AG04449 (cell line): ENCODE measurements at regions of chr12 and their contacts with region 1.

Region 1: GRCh38 chr12:95532851-95533250 is 18.4 kb downstream of the USP44 start:
- DNase-seq: no peak
- H3K4me3 ChIP-seq: no peak overlapping the region
- CTCF ChIP-seq: no peak

Region 2: GRCh38 chr12:95343461-95344230 is 189.2 kb before region 1 on chr12:
- CTCF ChIA-PET with region 1: interaction called, 24 read pairs
- POLR2A ChIA-PET with region 1: no interaction called
- DNase-seq: no peak
- H3K4me3 ChIP-seq: no peak overlapping the region
- CTCF ChIP-seq: no peak

Region 3: GRCh38 chr12:95548539-95549391 is 15.9 kb after region 1 on chr12:
- CTCF ChIA-PET with region 1: interaction called, 23 read pairs
- POLR2A ChIA-PET with region 1: interaction called, 3 read pairs
- DNase-seq: no peak
- H3K4me3 ChIP-seq: peak overlapping the region; percentile 56
- CTCF ChIP-seq: no peak